CD8-positive, alpha-beta T cell (primary cell): ENCODE measurements at regions of chr16 and their contacts with region 1.

Region 1: GRCh38 chr16:28950648-28951409 is at the start of gene NFATC2IP:
- DNase-seq: peak; percentile 98 to 100 (median 100)
- ATAC-seq: peak; percentile 92
- H3K4me3 ChIP-seq: peak within 1 kb of the TSS; percentile 67 to 75
- H3K4me3 Mint-ChIP-seq: peak within 1 kb of the TSS; percentile 89
- H3K27ac ChIP-seq: peak within 1 kb of the TSS; percentile 61 to 73
- H3K27ac Mint-ChIP-seq: peak within 1 kb of the TSS; percentile 85
- H3K4me1 ChIP-seq: peaks cover 17% of the 10 kb centered on the region
- H3K4me1 Mint-ChIP-seq: peaks cover 29% of the 10 kb centered on the region
- H3K27me3 ChIP-seq: no peaks in the 10 kb centered on the region
- H3K27me3 Mint-ChIP-seq: no peaks in the 10 kb centered on the region
- CTCF ChIP-seq: no peak
- total RNA-seq, gene NFATC2IP: 45.8 to 52.5 TPM

Region 2: GRCh38 chr16:28211712-28212534 is 738.9 kb before region 1 on chr16 and contains the start of gene XPO6:
- CTCF ChIA-PET with region 1: no interaction called
- POLR2A ChIA-PET with region 1: no interaction called
- intact Hi-C with region 1: loop called in 1 of 2 experiments (anchors 10 kb)
- DNase-seq: peak; percentile 96 to 100 (median 99)
- ATAC-seq: peak; percentile 90
- H3K4me3 ChIP-seq: peak within 1 kb of the TSS; percentile 69 to 91
- H3K4me3 Mint-ChIP-seq: peak within 1 kb of the TSS; percentile 90
- H3K27ac ChIP-seq: peak within 1 kb of the TSS; percentile 75 to 76
- H3K27ac Mint-ChIP-seq: peak within 1 kb of the TSS; percentile 91
- H3K4me1 ChIP-seq: peaks cover 32% of the 10 kb centered on the region
- H3K4me1 Mint-ChIP-seq: peaks cover 37% of the 10 kb centered on the region
- H3K27me3 ChIP-seq: no peaks in the 10 kb centered on the region
- H3K27me3 Mint-ChIP-seq: no peaks in the 10 kb centered on the region
- CTCF ChIP-seq: no peak
- total RNA-seq, gene XPO6: 355 to 369 TPM

Region 3: DNA sequence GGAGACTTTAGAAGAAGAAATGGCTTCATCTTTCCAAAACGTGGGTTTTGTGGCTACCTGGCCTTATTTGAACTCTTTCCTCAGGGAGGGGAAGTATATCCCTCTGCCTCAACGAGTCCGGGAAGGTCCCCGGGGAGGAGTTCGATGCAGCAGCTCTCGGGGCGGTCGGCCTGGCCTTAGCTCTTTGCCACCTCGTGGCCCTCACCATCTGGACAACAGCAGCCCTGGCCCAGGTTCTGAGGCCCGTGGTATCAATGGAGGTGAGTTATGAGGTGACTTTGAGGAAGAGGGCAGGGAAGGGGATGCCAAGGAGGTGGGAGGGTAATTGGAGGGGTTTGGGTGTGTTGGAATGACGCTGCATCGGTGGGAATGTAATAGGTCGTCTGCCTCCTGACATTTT is 120.3 kb before region 1 on chr16:
- CTCF ChIA-PET with region 1: no interaction called
- POLR2A ChIA-PET with region 1: no interaction called
- intact Hi-C with region 1: no loop called
- DNase-seq: no peak
- ATAC-seq: no peak
- H3K4me3 ChIP-seq: no peak overlapping the region
- H3K4me3 Mint-ChIP-seq: no peak overlapping the region
- H3K27ac ChIP-seq: no peak overlapping the region
- H3K27ac Mint-ChIP-seq: no peak overlapping the region
- H3K4me1 ChIP-seq: peaks cover 12% of the 10 kb centered on the region
- H3K4me1 Mint-ChIP-seq: peaks cover 26% of the 10 kb centered on the region
- H3K27me3 ChIP-seq: no peaks in the 10 kb centered on the region
- H3K27me3 Mint-ChIP-seq: no peaks in the 10 kb centered on the region
- CTCF ChIP-seq: no peak

Region 4: DNA sequence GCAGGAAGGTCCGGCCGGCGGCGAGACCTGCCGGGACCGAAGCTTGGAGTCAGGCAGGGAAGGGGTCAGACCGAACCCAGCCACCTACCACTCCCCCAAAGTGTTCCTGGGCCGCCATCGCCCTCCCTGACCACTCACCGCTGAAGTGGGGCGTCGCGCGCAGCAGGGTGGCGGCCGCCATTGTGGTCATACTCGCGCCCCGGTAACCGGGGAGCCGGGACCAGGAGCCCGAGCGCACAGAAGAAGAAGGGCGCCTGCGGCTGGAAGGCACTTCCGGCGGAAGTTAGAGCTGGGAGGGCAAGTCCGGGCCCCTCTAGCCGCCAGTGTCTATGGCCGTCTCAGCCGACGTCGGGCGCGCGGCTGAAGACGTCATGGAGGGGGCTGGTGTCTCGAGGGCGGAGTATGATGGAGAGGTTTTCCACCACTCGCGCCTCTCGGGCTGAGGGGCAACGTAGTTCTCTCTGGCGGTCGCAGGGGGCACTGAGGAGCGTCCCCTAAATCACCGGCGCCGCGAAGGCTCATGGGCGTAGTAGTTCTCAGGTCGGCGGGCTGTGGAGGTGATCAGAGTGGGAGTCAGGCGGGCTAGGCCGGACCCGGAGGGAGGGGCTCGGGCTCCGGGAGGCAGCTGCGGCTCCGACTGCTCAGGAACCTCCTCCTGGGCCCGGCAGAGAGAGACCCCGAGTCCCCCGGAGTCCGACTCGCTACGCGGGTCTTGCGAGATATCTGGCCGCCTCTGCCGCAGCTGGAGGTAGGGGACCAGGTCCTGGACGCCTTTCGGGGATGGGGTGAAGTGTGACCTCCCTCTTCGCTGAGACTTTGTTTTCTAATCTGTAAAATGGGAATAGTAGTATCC is 104.5 kb before region 1 on chr16 and contains the start of gene TUFM:
- CTCF ChIA-PET with region 1: no interaction called
- POLR2A ChIA-PET with region 1: interaction called, 3 read pairs
- intact Hi-C with region 1: loop called (anchors 1 kb)
- DNase-seq: peak; percentile 96 to 99 (median 98)
- ATAC-seq: peak; percentile 96
- H3K4me3 ChIP-seq: peak within 1 kb of the TSS; percentile 83 to 100
- H3K4me3 Mint-ChIP-seq: peak within 1 kb of the TSS; percentile 91
- H3K27ac ChIP-seq: peak within 1 kb of the TSS; percentile 78 to 93
- H3K27ac Mint-ChIP-seq: peak within 1 kb of the TSS; percentile 94
- H3K4me1 ChIP-seq: peaks cover 23% of the 10 kb centered on the region
- H3K4me1 Mint-ChIP-seq: peaks cover 32% of the 10 kb centered on the region
- H3K27me3 ChIP-seq: no peaks in the 10 kb centered on the region
- H3K27me3 Mint-ChIP-seq: no peaks in the 10 kb centered on the region
- CTCF ChIP-seq: peak; percentile 75
- total RNA-seq, gene TUFM: 111 to 119 TPM

Region 5: GRCh38 chr16:28879841-28880588 is 70.8 kb before region 1 on chr16:
- CTCF ChIA-PET with region 1: interaction called, 32 read pairs
- POLR2A ChIA-PET with region 1: interaction called, 5 read pairs
- intact Hi-C with region 1: loop called in 1 of 2 experiments (anchors 1 kb)
- DNase-seq: peak; percentile 78 to 91 (median 89)
- ATAC-seq: peak; percentile 97
- H3K4me3 ChIP-seq: peak overlapping the region; percentile 85 to 88
- H3K4me3 Mint-ChIP-seq: peak overlapping the region; percentile 86
- H3K27ac ChIP-seq: peak overlapping the region in 1 of 2 experiments; percentile 39
- H3K27ac Mint-ChIP-seq: no peak overlapping the region
- H3K4me1 ChIP-seq: peaks cover 9% of the 10 kb centered on the region
- H3K4me1 Mint-ChIP-seq: peaks cover 16% of the 10 kb centered on the region
- H3K27me3 ChIP-seq: no peaks in the 10 kb centered on the region
- H3K27me3 Mint-ChIP-seq: peaks cover 14% of the 10 kb centered on the region
- CTCF ChIP-seq: no peak

Region 6: GRCh38 chr16:28935924-28936783 is 14.7 kb before region 1 on chr16:
- CTCF ChIA-PET with region 1: interaction called, 10 read pairs
- POLR2A ChIA-PET with region 1: no interaction called
- intact Hi-C with region 1: loop called in 1 of 2 experiments (anchors 1 kb)
- DNase-seq: peak; percentile 61 to 89 (median 80)
- ATAC-seq: peak; percentile 100
- H3K4me3 ChIP-seq: peak overlapping the region; percentile 25 to 41
- H3K4me3 Mint-ChIP-seq: peak overlapping the region; percentile 76
- H3K27ac ChIP-seq: no peak overlapping the region
- H3K27ac Mint-ChIP-seq: no peak overlapping the region
- H3K4me1 ChIP-seq: peaks cover 19% of the 10 kb centered on the region
- H3K4me1 Mint-ChIP-seq: peaks cover 15% of the 10 kb centered on the region
- H3K27me3 ChIP-seq: no peaks in the 10 kb centered on the region
- H3K27me3 Mint-ChIP-seq: no peaks in the 10 kb centered on the region
- CTCF ChIP-seq: no peak

Region 7: GRCh38 chr16:29995911-29996772 is 1045.3 kb after region 1 on chr16 and contains the start of gene INO80E:
- CTCF ChIA-PET with region 1: no interaction called
- POLR2A ChIA-PET with region 1: no interaction called
- intact Hi-C with region 1: loop called in 1 of 2 experiments (anchors 2 kb)
- DNase-seq: peak; percentile 98 to 100 (median 99)
- ATAC-seq: peak; percentile 96
- H3K4me3 ChIP-seq: peak within 1 kb of the TSS; percentile 93 to 100
- H3K4me3 Mint-ChIP-seq: peak within 1 kb of the TSS; percentile 94
- H3K27ac ChIP-seq: peak within 1 kb of the TSS; percentile 99
- H3K27ac Mint-ChIP-seq: peak within 1 kb of the TSS; percentile 97
- H3K4me1 ChIP-seq: peaks cover 14% of the 10 kb centered on the region
- H3K4me1 Mint-ChIP-seq: peaks cover 39% of the 10 kb centered on the region
- H3K27me3 ChIP-seq: no peaks in the 10 kb centered on the region
- H3K27me3 Mint-ChIP-seq: no peaks in the 10 kb centered on the region
- CTCF ChIP-seq: no peak
- total RNA-seq, gene INO80E: 49.8 to 59.4 TPM